Calu3 (cell line): ENCODE measurements at regions of chr14 and their contacts with region 1.

Region 1: GRCh38 chr14:74141703-74142102 is 56.9 kb downstream of the LIN52 start:
- DNase-seq: no peak
- H3K4me3 Mint-ChIP-seq: no peak overlapping the region
- H3K27ac Mint-ChIP-seq: no peak overlapping the region
- H3K4me1 Mint-ChIP-seq: no peaks in the 10 kb centered on the region
- H3K27me3 Mint-ChIP-seq: no peaks in the 10 kb centered on the region
- CTCF ChIP-seq: no peak

Region 2: DNA sequence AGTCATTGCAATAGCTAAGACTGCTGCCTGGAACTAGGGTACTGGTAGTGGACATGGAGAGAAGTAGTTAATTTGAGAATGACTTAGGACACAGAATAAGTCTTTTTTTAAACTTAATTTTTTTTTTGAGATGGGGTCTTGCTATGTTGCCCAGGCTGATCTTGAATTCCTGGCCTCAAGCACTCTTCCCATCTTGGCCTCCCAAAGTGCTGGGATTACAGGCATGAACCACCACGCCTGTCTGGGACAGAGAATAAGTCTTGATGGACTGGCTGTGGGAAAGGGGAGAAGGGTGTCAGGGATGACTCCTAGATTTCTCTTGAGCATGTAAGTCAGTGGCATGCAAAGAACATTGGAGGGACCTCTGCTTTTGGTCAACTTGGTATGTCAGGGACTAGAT is 14.1 kb before region 1 on chr14:
- CTCF ChIA-PET with region 1: no interaction called
- intact Hi-C with region 1: no loop called
- DNase-seq: no peak
- H3K4me3 Mint-ChIP-seq: no peak overlapping the region
- H3K27ac Mint-ChIP-seq: no peak overlapping the region
- H3K4me1 Mint-ChIP-seq: no peaks in the 10 kb centered on the region
- H3K27me3 Mint-ChIP-seq: no peaks in the 10 kb centered on the region
- CTCF ChIP-seq: no peak

Region 3: DNA sequence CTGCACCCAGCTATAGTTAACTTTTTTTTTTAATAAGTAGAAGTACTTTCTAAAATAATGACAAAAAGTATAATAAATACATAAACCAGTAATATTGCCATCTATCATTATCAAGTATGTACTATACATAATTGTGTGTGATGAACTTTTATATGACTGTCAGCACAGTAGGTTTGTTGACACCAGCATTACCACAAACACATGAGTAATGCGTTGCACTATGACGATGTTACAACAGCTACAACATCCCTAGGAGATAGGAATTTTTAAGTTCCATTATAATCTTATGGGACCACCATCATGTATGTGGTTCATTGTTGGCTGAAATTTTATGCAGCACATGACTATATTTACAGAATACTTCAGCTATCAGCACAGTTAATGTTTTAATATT is 34.7 kb after region 1 on chr14:
- CTCF ChIA-PET with region 1: no interaction called
- intact Hi-C with region 1: loop called (anchors 1 kb)
- DNase-seq: no peak
- H3K4me3 Mint-ChIP-seq: no peak overlapping the region
- H3K27ac Mint-ChIP-seq: no peak overlapping the region
- H3K4me1 Mint-ChIP-seq: no peaks in the 10 kb centered on the region
- H3K27me3 Mint-ChIP-seq: no peaks in the 10 kb centered on the region
- CTCF ChIP-seq: no peak